ENCODE measurements at regions of chr4 and their contacts with region 1.

Region 1: GRCh38 chr4:145234091-145234706 is 53.8 kb upstream of the OTUD4 start:
- DNase-seq: no peak
- ATAC-seq: no peak
- H3K4me3 ChIP-seq: no peak overlapping the region
- H3K27ac ChIP-seq: no peak overlapping the region
- H3K4me1 ChIP-seq: peaks cover 0 to 2% of the 10 kb centered on the region in 2 donors
- H3K27me3 ChIP-seq: no peaks in the 10 kb centered on the region

Region 2: DNA sequence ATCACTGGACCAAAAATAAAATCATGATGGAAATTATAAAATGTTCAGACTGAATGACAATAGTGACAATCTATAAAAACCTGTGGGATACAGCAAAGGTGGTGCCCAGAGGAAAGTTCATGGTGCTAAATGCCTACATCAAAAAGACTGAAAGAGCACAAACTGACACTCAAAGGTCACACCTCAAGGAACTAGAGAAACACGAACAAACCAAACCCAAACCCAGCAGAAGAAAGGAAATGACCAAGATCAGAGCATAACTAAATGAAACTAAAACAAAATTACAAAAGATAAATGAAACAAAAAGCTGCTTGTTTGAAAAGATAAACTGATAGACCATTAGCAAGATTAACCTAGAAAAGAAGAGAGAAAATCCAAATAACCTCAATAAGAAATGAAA is 214.9 kb before region 1 on chr4:
- intact Hi-C with region 1: no loop called
- DNase-seq: no peak
- ATAC-seq: no peak
- H3K4me3 ChIP-seq: no peak overlapping the region
- H3K27ac ChIP-seq: no peak overlapping the region
- H3K4me1 ChIP-seq: no peaks in the 10 kb centered on the region
- H3K27me3 ChIP-seq: no peaks in the 10 kb centered on the region

Region 3: DNA sequence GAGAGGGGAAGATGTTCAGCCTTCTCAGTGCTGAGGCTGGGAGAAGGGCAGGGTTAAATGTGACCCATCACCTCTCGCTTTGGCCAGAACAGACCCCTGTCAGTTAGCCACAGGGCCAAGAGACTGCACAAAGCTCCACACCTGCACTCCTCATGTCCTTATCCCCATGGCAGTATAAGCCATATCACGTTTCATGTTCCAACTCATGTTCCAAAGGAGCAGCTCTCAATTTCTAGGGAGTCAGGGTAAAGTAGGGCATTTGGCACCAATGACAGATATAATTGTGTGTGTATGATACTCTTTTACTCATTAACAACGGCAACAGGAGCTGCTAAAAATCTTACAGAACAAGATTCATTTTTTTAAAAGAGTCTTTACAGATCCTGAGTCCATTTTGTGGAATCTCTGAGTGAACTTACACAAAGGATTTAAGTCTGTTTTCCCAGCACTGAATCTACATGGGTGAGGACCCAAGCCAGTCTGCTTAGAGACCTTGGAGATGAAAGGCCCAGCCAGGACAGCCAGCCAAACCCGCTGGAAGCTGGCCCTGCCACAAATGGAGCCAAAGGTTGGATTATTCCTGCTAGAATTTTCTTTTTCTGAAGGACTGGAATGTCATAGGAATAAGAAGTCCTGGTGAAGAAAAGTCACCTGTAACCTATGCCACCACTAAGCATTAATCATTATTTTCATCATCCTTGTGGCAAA is 118.4 kb after region 1 on chr4:
- intact Hi-C with region 1: no loop called
- DNase-seq: no peak
- ATAC-seq: no peak
- H3K4me3 ChIP-seq: no peak overlapping the region
- H3K27ac ChIP-seq: no peak overlapping the region
- H3K4me1 ChIP-seq: peaks cover 0 to 2% of the 10 kb centered on the region in 2 donors
- H3K27me3 ChIP-seq: no peaks in the 10 kb centered on the region

Region 4: DNA sequence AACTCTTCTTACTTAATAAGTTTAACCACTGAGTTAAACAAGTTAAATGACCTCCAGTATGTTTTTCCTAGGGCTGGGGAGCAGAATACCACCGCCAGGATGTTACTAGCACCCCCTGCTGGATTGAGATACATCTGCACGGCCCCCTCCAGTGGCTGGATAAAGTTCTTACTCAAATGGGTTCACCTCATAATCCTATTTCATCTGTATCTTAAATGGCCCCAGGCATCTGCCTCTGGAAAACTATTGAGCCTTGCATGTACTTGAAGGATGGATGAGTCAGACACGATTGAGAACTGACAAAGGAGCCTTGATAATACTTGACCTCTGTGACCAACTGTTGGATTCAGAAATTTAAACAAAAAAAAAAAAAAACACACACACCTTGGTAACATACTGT is 323.5 kb after region 1 on chr4:
- intact Hi-C with region 1: loop called in 1 of 2 experiments (anchors 10 kb)
- DNase-seq: peak in 1 of 2 donors; percentile 54
- ATAC-seq: peak; percentile 82
- H3K4me3 ChIP-seq: no peak overlapping the region
- H3K27ac ChIP-seq: no peak overlapping the region
- H3K4me1 ChIP-seq: no peaks in the 10 kb centered on the region
- H3K27me3 ChIP-seq: no peaks in the 10 kb centered on the region

Region 5: DNA sequence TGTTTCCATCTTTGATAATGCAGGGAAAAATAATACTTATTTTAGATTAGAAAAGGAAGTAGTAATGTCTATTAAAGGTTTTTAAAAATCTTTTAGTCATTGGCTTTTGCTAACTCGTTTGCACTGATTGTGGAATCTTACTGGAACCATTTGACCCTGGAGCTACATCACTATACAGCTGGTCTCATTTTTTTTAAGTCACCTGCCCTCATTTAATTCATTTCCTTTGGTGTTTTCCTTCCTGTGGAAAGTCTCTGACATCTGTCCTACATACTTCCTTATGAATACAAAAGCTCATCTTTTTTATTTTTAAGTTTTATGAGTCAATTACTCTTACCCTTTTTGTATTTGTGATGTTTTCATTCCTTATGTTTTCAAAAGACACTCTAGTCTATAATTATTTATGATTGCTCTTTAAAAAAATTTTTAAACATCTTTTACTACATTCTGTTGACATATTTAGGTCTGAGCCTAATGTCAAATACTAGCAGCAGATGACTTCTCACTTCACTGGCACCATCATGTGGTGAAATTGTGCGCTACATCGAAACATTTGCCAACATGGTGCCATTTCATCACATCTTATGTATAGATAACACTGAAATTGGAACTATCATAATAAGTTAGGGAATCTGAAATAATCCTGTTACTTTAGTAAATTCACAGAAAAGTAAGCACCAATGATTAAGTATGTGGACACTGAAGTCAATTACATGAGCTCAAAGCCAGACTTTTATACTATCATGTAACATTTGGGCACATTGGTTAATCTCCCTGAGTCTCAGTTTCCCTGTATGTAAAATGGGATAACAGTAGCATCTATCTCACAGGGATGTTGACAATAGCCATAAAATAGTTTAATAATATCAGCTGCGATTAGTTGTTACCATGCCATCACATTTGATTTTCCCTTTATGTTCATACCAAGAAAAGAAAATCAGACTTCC is 375.6 kb after region 1 on chr4:
- intact Hi-C with region 1: loop called (anchors 10 kb)
- DNase-seq: peak in 1 of 2 donors; percentile 51
- ATAC-seq: peak; percentile 76
- H3K4me3 ChIP-seq: no peak overlapping the region
- H3K27ac ChIP-seq: no peak overlapping the region
- H3K4me1 ChIP-seq: no peaks in the 10 kb centered on the region
- H3K27me3 ChIP-seq: no peaks in the 10 kb centered on the region

Measured in aorta (tissue), 5 donors.